Posterior cingulate gyrus (tissue), 11 donors: ENCODE measurements at regions of chr16 and their contacts with region 1.

Region 1: GRCh38 chr16:89700100-89700648 is 1.3 kb downstream of the SPATA2L start:
- DNase-seq: peak; percentile 98 to 100 (median 100)

Region 2: GRCh38 chr16:89670496-89671431 is 29.4 kb before region 1 on chr16:
- intact Hi-C with region 1: no loop called
- DNase-seq: no peak

Region 3: GRCh38 chr16:89686520-89687091 is 13.6 kb before region 1 on chr16 and contains the start of gene CDK10:
- intact Hi-C with region 1: loop called (anchors 2 kb)
- DNase-seq: peak; percentile 82 to 99 (median 91)

Region 4: GRCh38 chr16:89860747-89861304 is 160.7 kb after region 1 on chr16:
- intact Hi-C with region 1: loop called (anchors 2 kb)
- DNase-seq: peak in 7 of 10 donors; percentile 33 to 95 (median 63)